ENCODE measurements at regions of chr3 and their contacts with region 1.

Region 1: DNA sequence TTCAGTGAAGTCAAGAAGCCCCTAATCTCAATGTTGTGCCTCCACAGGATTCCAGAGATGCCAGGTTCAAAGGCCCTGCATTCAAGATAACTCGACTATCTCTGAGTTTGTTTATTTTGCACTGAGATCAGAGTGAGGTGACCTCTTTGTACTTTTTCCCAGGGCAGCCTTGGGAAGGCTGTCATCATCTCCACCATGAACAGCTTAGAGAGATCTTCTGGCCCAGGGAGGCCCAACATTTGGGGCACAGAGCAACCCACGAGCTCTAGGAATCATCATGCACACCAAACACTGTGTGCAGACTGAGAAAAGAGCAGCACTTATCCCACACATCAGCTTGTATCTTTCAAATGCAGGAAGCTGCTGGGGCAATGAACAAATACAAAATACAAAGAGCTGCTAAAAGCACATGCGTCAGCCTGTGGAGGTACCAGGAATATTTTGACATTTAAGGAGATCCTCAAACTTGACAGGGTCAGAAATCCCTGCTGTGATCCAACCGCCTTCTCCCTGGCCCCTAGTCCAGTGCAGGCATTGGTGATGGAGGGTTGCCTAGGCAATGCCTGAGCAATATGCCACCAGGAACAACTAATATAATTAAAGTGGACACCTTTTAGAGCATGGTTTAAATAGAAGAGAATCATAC is 33.6 kb downstream of the TRIM42 start:
- DNase-seq: peak; percentile 65 to 80
- H3K4me3 ChIP-seq: no peak overlapping the region
- H3K4me3 Mint-ChIP-seq: no peak overlapping the region
- H3K27ac Mint-ChIP-seq: peak overlapping the region; percentile 91
- H3K4me1 ChIP-seq: peaks cover 38% of the 10 kb centered on the region
- H3K4me1 Mint-ChIP-seq: peaks cover 32% of the 10 kb centered on the region
- H3K27me3 ChIP-seq: no peaks in the 10 kb centered on the region
- H3K27me3 Mint-ChIP-seq: no peaks in the 10 kb centered on the region
- CTCF ChIP-seq: no peak

Region 2: GRCh38 chr3:140686948-140687347 is 24.6 kb before region 1 on chr3:
- CTCF ChIA-PET with region 1: no interaction called
- POLR2A ChIA-PET with region 1: no interaction called
- intact Hi-C with region 1: no loop called
- DNase-seq: no peak
- H3K4me3 ChIP-seq: no peak overlapping the region
- H3K4me3 Mint-ChIP-seq: no peak overlapping the region
- H3K27ac Mint-ChIP-seq: no peak overlapping the region
- H3K4me1 ChIP-seq: no peaks in the 10 kb centered on the region
- H3K4me1 Mint-ChIP-seq: no peaks in the 10 kb centered on the region
- H3K27me3 ChIP-seq: no peaks in the 10 kb centered on the region
- H3K27me3 Mint-ChIP-seq: no peaks in the 10 kb centered on the region
- CTCF ChIP-seq: no peak

Region 3: DNA sequence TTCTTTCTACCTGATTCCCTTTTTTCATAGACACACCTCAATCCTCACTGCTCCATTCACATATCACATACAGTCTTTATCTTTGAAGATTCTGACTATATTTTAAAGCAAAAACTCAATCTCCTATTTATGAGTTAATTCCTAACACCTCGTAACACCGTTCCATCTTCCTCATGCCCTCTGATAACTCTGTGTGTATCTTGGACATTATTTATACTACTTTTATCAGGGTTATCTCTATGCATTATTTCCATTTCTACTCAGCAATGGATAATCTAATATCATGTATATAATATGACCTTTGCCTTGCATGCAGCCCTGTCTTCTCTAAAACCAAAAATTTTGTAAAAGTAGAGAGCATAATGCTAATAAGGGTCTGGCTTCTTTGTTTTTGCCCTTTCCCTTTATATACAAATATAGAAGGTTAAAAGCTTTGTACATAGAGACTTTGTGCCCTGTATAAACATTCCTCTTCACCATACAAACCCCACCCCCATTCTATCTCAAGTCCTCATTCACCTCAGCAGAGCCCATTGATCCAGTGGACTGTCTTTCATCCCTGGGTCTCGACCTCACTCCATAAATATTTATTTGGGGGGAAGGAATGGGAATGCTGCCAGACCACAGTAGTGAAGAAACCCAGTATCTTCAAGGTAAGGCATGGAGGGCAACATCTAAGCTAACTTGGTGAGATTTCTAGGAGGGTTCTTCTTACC is 11.8 kb before region 1 on chr3:
- CTCF ChIA-PET with region 1: no interaction called
- POLR2A ChIA-PET with region 1: no interaction called
- intact Hi-C with region 1: loop called (anchors 1 kb)
- DNase-seq: peak; percentile 54 to 71
- H3K4me3 ChIP-seq: no peak overlapping the region
- H3K4me3 Mint-ChIP-seq: no peak overlapping the region
- H3K27ac Mint-ChIP-seq: no peak overlapping the region
- H3K4me1 ChIP-seq: peaks cover 11% of the 10 kb centered on the region
- H3K4me1 Mint-ChIP-seq: peaks cover 11% of the 10 kb centered on the region
- H3K27me3 ChIP-seq: no peaks in the 10 kb centered on the region
- H3K27me3 Mint-ChIP-seq: no peaks in the 10 kb centered on the region
- CTCF ChIP-seq: no peak

Measured in Caco-2 (cell line).